ENCODE measurements at regions of chr1 and their contacts with region 1.

Region 1: DNA sequence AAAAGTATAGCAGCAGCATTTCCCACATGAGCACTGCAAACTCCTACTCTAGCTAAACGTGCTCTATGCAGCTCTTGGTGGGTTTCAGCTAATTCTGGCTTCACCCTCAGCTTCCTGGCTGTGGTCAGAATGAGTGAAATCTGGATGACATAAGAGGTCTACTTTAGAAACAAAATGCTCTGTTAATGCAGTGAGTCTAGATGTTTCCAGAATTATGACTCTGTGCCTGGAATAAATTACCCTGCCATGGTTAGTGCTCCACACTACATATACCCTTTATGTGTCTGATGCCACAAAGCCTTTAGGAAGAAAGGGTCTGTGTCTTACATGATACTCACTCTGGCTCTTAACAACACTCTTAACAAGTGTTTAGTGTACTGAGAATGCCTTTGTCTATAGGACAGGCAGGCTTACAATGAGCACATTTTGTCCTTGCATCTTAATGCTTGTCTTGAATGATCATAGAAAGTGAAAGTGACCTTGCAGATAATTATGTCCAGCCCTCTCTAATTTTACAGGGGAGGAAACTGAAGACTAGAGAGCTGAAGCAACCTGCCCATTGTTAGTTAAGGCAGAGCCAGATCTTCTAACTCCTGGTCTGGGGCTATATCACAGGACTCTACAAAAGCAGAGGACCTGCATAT is 9.2 kb downstream of the S100A10 start:
- DNase-seq: peak; percentile 68
- H3K4me3 Mint-ChIP-seq: peak overlapping the region; percentile 22
- H3K27ac Mint-ChIP-seq: peak overlapping the region; percentile 84
- H3K4me1 Mint-ChIP-seq: peaks cover 48% of the 10 kb centered on the region
- H3K27me3 Mint-ChIP-seq: no peaks in the 10 kb centered on the region

Region 2: DNA sequence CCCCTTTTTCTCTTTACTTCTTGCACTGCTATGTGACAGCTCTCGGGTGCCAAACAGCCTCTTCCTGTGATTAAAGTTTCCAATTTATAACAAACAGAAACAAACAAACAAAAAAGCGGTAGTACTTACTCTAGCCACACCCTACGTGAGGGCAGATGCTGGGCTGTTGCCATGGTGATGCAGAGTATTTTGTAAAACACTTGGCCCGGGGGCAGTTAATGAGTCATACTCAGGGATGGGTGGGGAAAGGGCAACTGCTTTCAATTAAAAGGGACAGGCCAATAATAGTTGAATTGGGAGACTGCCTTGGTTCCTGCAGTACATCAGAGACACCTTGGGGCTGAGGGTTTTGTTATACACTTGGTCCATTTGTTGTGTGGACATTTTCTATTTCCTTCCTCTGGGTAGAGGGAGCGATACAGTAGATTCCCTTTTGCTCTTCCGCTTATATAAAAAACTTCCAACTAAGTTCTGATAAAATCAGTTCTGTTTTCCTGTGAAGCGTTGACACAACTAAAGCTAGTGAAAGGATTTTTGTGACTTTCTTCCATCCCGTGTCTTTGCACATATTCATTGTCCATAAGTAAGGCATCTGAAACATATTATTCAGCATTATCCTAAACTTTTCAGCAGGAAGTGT is 38.6 kb before region 1 on chr1:
- CTCF ChIA-PET with region 1: no interaction called
- intact Hi-C with region 1: loop called (anchors 1 kb)
- DNase-seq: peak; percentile 75
- H3K4me3 Mint-ChIP-seq: no peak overlapping the region
- H3K27ac Mint-ChIP-seq: peak overlapping the region; percentile 28
- H3K4me1 Mint-ChIP-seq: peaks cover 33% of the 10 kb centered on the region
- H3K27me3 Mint-ChIP-seq: no peaks in the 10 kb centered on the region

Region 3: DNA sequence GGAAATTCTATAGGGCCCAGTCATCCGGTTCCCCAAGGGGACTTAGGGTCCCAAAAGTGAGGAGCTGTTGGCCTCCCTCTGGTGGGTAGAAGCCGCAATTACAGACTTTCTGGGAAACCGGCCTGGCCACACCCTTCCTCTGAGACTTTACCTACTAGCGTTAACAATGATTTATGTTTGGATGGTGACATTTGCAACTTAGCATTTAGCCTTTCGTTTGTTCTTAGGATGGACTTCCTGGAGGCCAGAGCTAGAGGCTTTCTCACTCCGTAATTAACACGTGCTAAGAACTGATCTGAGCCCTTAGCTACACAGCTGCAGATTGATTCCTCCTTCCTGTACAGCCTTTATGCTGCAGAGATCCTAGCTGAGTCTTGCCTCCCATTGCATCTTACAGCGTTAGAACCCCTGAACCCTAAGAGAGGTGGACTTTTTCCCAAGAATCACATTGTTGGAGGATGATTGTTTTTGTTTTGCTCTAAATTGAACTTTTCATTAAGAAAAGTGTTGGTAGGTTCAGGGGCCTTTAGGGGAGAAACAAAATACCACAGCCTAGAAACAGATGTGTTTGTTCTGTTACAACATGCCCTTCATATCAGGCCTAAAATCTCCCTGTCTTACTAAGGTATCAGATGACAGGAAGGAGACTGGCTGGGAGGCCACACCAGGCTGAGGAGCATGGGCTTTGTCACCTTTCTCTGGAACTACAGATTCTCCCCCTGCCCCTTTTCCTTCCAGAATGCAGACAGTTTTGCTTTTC is 50.4 kb after region 1 on chr1:
- CTCF ChIA-PET with region 1: interaction called, 5 read pairs
- intact Hi-C with region 1: loop called (anchors 2 kb)
- DNase-seq: peak; percentile 85
- H3K4me3 Mint-ChIP-seq: peak overlapping the region; percentile 96
- H3K27ac Mint-ChIP-seq: peak overlapping the region; percentile 98
- H3K4me1 Mint-ChIP-seq: peaks cover 21% of the 10 kb centered on the region
- H3K27me3 Mint-ChIP-seq: no peaks in the 10 kb centered on the region